Right ventricle myocardium inferior (tissue), 1 donor: ENCODE measurements at regions of chr18 and their contacts with region 1.

Region 1: DNA sequence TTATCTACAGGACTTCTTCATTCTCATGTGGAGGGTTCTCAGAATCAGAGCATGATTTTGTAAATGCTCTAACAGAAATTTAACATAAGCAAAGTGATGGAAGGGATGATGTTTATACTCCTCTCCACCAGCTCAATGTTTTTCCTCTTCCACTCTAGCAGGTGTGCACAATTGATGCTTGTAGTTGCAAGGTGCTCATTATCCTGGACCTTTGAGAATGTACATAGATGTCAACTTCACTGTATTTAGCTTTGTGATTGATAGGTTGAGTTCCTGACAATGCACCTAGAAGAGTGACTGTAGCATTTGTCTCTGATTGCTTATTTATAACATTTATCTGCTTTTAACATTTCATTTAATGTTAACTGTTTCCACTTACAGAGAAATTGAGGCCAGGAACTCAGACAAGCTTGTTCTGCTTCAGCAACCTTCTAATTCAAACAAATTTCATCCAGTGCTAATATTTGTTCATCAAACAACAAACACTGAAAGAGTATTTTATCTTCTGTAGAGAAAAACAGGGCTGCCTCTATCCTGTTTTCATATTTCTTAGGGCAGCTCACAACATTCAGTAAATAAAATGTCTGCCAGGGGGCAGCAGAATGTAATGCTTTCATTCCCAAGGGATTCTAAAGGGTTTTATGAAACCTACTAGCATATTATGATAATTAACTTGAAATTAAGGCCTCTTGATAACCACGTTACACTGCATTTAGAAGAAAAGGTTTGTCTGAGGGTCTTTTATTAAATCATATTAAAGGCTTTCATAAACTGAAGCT is 127.9 kb upstream of the NOL4 start:
- DNase-seq: no peak
- ATAC-seq: no peak

Region 2: DNA sequence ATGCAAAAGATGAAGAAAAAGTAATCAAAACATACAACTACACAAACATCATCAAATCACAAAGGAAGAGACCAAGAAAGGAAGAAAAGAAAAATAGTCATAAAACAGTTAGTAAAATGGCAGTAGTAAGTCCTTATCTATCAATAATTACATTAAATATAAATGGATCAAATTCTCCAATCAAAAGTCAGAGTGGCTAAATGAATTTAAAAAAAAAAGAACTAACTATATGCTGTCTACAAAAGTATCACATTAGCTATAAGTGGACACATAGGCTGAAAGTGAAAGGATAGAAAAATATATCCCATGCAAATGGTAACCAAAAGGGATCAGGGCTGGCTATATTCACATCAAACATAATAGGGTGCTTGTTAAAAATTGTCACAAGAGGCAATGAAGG is 244.4 kb before region 1 on chr18:
- intact Hi-C with region 1: no loop called
- DNase-seq: no peak
- ATAC-seq: no peak

Region 3: GRCh38 chr18:34385311-34385710 is 32.7 kb after region 1 on chr18:
- intact Hi-C with region 1: no loop called
- DNase-seq: no peak
- ATAC-seq: no peak

Region 4: GRCh38 chr18:34643989-34644388 is 291.4 kb after region 1 on chr18:
- intact Hi-C with region 1: loop called (anchors 5 kb)
- DNase-seq: no peak
- ATAC-seq: no peak